CD4-positive, alpha-beta T cell (primary cell): ENCODE measurements at regions of chr2 and their contacts with region 1.

Region 1: GRCh38 chr2:162318328-162319180 is at the start of gene IFIH1:
- DNase-seq: peak; percentile 42 to 95 (median 63)
- ATAC-seq: peak; percentile 85
- H3K4me3 ChIP-seq: peak within 1 kb of the TSS; percentile 90
- H3K4me3 Mint-ChIP-seq: peak within 1 kb of the TSS; percentile 98
- H3K27ac ChIP-seq: peak within 1 kb of the TSS; percentile 91 to 97
- H3K27ac Mint-ChIP-seq: peak within 1 kb of the TSS; percentile 99
- H3K4me1 ChIP-seq: peaks cover 29% of the 10 kb centered on the region
- H3K4me1 Mint-ChIP-seq: peaks cover 75% of the 10 kb centered on the region
- H3K27me3 ChIP-seq: no peaks in the 10 kb centered on the region
- H3K27me3 Mint-ChIP-seq: no peaks in the 10 kb centered on the region
- CTCF ChIP-seq: no peak
- total RNA-seq, gene IFIH1: 31.1 to 32.1 TPM

Region 2: DNA sequence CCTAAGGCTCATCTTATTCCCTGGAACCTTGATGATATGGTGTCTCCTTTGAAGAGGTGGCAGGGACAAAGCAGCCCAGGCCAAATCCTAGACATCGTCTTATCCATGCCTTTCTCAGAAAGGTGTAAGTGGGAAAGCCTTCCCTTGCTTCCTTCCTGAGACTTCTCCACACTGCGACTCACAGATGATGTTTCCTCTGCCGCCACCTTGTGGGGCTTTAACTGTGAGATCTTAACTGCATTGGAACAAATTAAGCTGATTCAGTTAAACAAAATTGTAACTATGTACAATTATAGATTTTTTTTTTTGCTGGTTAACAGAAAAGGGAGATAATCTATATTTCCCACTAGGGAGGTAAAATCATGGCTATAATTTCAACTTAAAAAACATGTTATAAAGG is 15.4 kb after region 1 on chr2:
- CTCF ChIA-PET with region 1: interaction called, 6 read pairs
- POLR2A ChIA-PET with region 1: interaction called, 9 read pairs
- intact Hi-C with region 1: loop called in 1 of 2 experiments (anchors 2 kb)
- DNase-seq: peak in 5 of 14 experiments; percentile 8 to 60 (median 42)
- ATAC-seq: no peak
- H3K4me3 ChIP-seq: no peak overlapping the region
- H3K4me3 Mint-ChIP-seq: no peak overlapping the region
- H3K27ac ChIP-seq: no peak overlapping the region
- H3K27ac Mint-ChIP-seq: no peak overlapping the region
- H3K4me1 ChIP-seq: no peaks in the 10 kb centered on the region
- H3K4me1 Mint-ChIP-seq: no peaks in the 10 kb centered on the region
- H3K27me3 ChIP-seq: no peaks in the 10 kb centered on the region
- H3K27me3 Mint-ChIP-seq: no peaks in the 10 kb centered on the region
- CTCF ChIP-seq: peak; percentile 32

Region 3: DNA sequence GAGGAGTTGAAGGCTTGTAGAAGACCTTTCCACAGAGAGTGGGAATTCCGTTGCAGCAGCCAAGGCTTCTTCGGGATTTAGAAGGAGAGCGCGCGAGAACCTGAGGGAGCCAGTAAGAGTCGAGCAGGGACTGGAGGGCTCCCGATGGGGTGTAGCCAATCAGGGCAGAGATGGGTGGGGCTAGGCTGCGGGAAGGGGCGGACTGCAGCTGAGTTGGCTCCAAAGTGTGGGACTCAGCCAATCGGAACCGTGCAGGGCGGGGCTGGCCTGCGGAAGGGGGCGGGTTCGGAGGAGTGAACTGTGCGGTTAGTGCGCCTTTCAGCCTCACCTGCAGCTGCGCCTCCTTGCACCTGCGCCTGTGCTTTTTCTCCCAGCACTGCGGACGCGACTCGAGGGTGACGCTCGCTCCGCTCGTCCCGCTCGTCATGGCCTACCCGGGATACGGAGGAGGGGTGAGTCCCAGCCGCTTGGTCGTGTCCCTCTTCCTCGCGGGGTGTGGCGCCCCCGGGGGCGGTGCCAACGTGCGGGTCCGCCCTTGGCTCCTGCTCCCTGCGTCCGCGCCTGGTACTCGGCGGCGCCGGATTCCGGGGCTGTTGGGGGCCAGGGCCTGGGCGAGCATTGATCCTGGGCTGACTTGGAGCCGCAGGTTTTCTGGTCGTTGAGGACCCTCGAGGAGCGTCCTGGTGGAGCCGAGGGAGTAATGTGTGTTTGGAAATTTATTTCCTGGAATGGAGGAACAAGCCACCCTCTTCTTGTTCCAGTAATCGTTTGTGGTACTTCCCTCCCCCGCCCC is 25.5 kb after region 1 on chr2 and contains the start of gene GCA:
- CTCF ChIA-PET with region 1: interaction called, 7 read pairs
- POLR2A ChIA-PET with region 1: interaction called, 30 read pairs
- intact Hi-C with region 1: loop called (anchors 1 to 2 kb)
- DNase-seq: peak; percentile 93 to 99 (median 98)
- ATAC-seq: peak; percentile 96
- H3K4me3 ChIP-seq: peak within 1 kb of the TSS; percentile 64
- H3K4me3 Mint-ChIP-seq: peak within 1 kb of the TSS; percentile 82
- H3K27ac ChIP-seq: no peak within 1 kb of the TSS
- H3K27ac Mint-ChIP-seq: peak within 1 kb of the TSS; percentile 83
- H3K4me1 ChIP-seq: peaks cover 12% of the 10 kb centered on the region
- H3K4me1 Mint-ChIP-seq: peaks cover 19% of the 10 kb centered on the region
- H3K27me3 ChIP-seq: no peaks in the 10 kb centered on the region
- H3K27me3 Mint-ChIP-seq: no peaks in the 10 kb centered on the region
- CTCF ChIP-seq: no peak
- total RNA-seq, gene GCA: 3.9 to 5.0 TPM